ENCODE measurements at regions of chr16 and their contacts with region 1.

Region 1: GRCh38 chr16:4116337-4117249 is at the start of gene ADCY9:
- DNase-seq: peak; percentile 75 to 85 (median 80)
- H3K4me3 ChIP-seq: peak within 1 kb of the TSS in 1 of 2 donors; percentile 57
- H3K4me3 Mint-ChIP-seq: peak within 1 kb of the TSS; percentile 83 to 94 (median 90)
- H3K27ac ChIP-seq: peak within 1 kb of the TSS; percentile 43
- H3K27ac Mint-ChIP-seq: peak within 1 kb of the TSS; percentile 53 to 94 (median 89)
- H3K4me1 ChIP-seq: peaks cover 45% of the 10 kb centered on the region
- H3K4me1 Mint-ChIP-seq: peaks cover 33 to 41% (median 37%) of the 10 kb centered on the region in 4 donors
- H3K27me3 ChIP-seq: no peaks in the 10 kb centered on the region
- H3K27me3 Mint-ChIP-seq: peaks cover 2% of the 10 kb centered on the region in 2 donors
- total RNA-seq, gene ADCY9: 7.8 to 8.1 TPM

Region 2: DNA sequence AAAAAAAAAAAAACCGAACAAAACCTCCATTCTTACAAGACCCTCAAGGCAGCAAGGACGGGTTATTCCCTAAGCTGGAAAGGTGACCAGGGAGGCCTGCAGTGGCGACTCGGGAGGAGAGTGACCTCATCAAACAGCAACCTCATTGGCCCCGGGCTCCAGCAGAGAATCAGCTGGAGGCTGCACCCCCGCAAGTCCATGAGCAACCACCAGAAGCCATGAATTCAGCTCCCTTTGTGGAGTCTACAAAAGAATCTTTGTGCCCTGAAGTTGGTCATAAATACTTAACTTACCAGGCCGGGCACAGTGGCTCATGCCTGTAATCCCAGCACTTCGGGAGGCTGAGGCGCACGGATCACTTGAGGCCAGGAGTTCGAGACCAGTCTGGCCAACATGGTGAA is 155.1 kb before region 1 on chr16:
- CTCF ChIA-PET with region 1: no interaction called
- POLR2A ChIA-PET with region 1: interaction called, 4 read pairs
- intact Hi-C with region 1: loop called (anchors 10 kb)
- DNase-seq: no peak
- H3K4me3 ChIP-seq: peak overlapping the region in 1 of 2 donors; percentile 32
- H3K4me3 Mint-ChIP-seq: peak overlapping the region in 4 of 8 donors; percentile 89 to 94 (median 91)
- H3K27ac ChIP-seq: no peak overlapping the region
- H3K27ac Mint-ChIP-seq: peak overlapping the region; percentile 53 to 97 (median 93)
- H3K4me1 ChIP-seq: peaks cover 25% of the 10 kb centered on the region
- H3K4me1 Mint-ChIP-seq: peaks cover 13 to 35% (median 21%) of the 10 kb centered on the region in 4 donors
- H3K27me3 ChIP-seq: no peaks in the 10 kb centered on the region
- H3K27me3 Mint-ChIP-seq: peaks cover 7 to 8% of the 10 kb centered on the region in 2 donors

Region 3: GRCh38 chr16:4183237-4184036 is 66.8 kb after region 1 on chr16:
- CTCF ChIA-PET with region 1: no interaction called
- POLR2A ChIA-PET with region 1: no interaction called
- intact Hi-C with region 1: loop called (anchors 2 kb)
- DNase-seq: peak; percentile 68 to 83 (median 73)
- H3K4me3 ChIP-seq: peak overlapping the region; percentile 14 to 69
- H3K4me3 Mint-ChIP-seq: peak overlapping the region; percentile 76 to 86 (median 81)
- H3K27ac ChIP-seq: peak overlapping the region; percentile 51
- H3K27ac Mint-ChIP-seq: peak overlapping the region in 5 of 7 donors; percentile 35 to 67 (median 64)
- H3K4me1 ChIP-seq: no peaks in the 10 kb centered on the region
- H3K4me1 Mint-ChIP-seq: peaks cover 3 to 9% (median 4%) of the 10 kb centered on the region in 4 donors
- H3K27me3 ChIP-seq: no peaks in the 10 kb centered on the region
- H3K27me3 Mint-ChIP-seq: no peaks in the 10 kb centered on the region

Measured in CD4-positive, alpha-beta memory T cell (primary cell).